Adrenal gland (tissue), 19 donors: ENCODE measurements at regions of chr3 and their contacts with region 1.

Region 1: GRCh38 chr3:184543843-184544512 is 17.6 kb upstream of the EPHB3 start:
- DNase-seq: peak; percentile 75 to 90 (median 82)
- H3K4me3 ChIP-seq: no peak overlapping the region
- H3K27ac ChIP-seq: no peak overlapping the region
- H3K4me1 ChIP-seq: peaks cover 0 to 5% of the 10 kb centered on the region in 2 donors
- H3K27me3 ChIP-seq: peaks cover 5% of the 10 kb centered on the region
- CTCF ChIP-seq: peak; percentile 88 to 95 (median 91)
- POLR2A ChIP-seq: no peak

Region 2: GRCh38 chr3:184371570-184372018 is 172.4 kb before region 1 on chr3:
- intact Hi-C with region 1: loop called (anchors 5 kb)
- DNase-seq: peak; percentile 83 to 93 (median 89)
- H3K4me3 ChIP-seq: no peak overlapping the region
- H3K27ac ChIP-seq: no peak overlapping the region
- H3K4me1 ChIP-seq: peaks cover 10 to 36% of the 10 kb centered on the region in 2 donors
- H3K27me3 ChIP-seq: no peaks in the 10 kb centered on the region
- CTCF ChIP-seq: peak; percentile 88 to 98 (median 96)
- POLR2A ChIP-seq: no peak

Region 3: GRCh38 chr3:184379358-184380188 is 164.4 kb before region 1 on chr3 and contains the start of gene CHRD:
- intact Hi-C with region 1: loop called (anchors 5 kb)
- DNase-seq: no peak
- H3K4me3 ChIP-seq: peak within 1 kb of the TSS in 2 of 4 donors; percentile 10 to 87
- H3K27ac ChIP-seq: peak within 1 kb of the TSS in 3 of 5 donors; percentile 10 to 88 (median 66)
- H3K4me1 ChIP-seq: peaks cover 8 to 27% of the 10 kb centered on the region in 2 donors
- H3K27me3 ChIP-seq: peaks cover 8% of the 10 kb centered on the region
- CTCF ChIP-seq: no peak
- POLR2A ChIP-seq: no peak
- total RNA-seq, gene CHRD: 1.1 to 101 (median 23.7) TPM

Region 4: GRCh38 chr3:184417619-184418327 is 126.2 kb before region 1 on chr3:
- intact Hi-C with region 1: loop called in 1 of 2 experiments (anchors 5 kb)
- DNase-seq: peak; percentile 71 to 84 (median 74)
- H3K4me3 ChIP-seq: no peak overlapping the region
- H3K27ac ChIP-seq: no peak overlapping the region
- H3K4me1 ChIP-seq: no peaks in the 10 kb centered on the region
- H3K27me3 ChIP-seq: no peaks in the 10 kb centered on the region
- CTCF ChIP-seq: peak; percentile 86 to 95 (median 90)
- POLR2A ChIP-seq: no peak

Region 5: DNA sequence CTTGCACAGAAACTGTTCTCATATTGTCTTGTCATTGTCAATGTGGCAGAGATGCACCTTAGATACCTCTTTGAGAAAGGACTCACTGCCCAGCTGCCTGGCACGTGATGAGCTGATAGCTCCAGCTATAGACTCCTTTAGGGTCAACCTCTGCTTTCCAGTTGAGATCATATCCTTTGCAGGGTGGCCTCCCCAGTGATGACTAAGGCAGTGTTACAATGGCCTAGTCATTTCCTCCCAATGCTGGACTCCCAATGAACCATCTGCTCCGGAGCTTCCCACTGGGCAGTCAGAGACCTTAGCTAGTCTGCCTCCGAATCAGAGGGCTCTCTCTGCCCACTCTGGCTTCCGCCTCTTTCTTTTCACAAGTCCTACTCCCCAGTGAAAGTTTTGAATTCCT is 84.6 kb before region 1 on chr3:
- intact Hi-C with region 1: no loop called
- DNase-seq: no peak
- H3K4me3 ChIP-seq: no peak overlapping the region
- H3K27ac ChIP-seq: no peak overlapping the region
- H3K4me1 ChIP-seq: no peaks in the 10 kb centered on the region
- H3K27me3 ChIP-seq: no peaks in the 10 kb centered on the region
- CTCF ChIP-seq: no peak
- POLR2A ChIP-seq: no peak

Region 6: GRCh38 chr3:184583578-184584425 is 39.8 kb after region 1 on chr3:
- intact Hi-C with region 1: no loop called
- DNase-seq: peak in 3 of 7 donors; percentile 23 to 46 (median 38)
- H3K4me3 ChIP-seq: peak overlapping the region in 2 of 4 donors; percentile 83 to 88
- H3K27ac ChIP-seq: peak overlapping the region in 3 of 5 donors; percentile 48 to 85 (median 71)
- H3K4me1 ChIP-seq: peaks cover 3 to 4% of the 10 kb centered on the region in 2 donors
- H3K27me3 ChIP-seq: no peaks in the 10 kb centered on the region
- CTCF ChIP-seq: peak in 3 of 6 experiments; percentile 11 to 29 (median 21)
- POLR2A ChIP-seq: no peak